Activated naive CD4-positive, alpha-beta T cell treated with anti-CD3 and anti-CD28 coated beads, Interleukin-2, amount 10 ng/mL, durations not matched to agents 7 days and 5 days (primary cell): ENCODE measurements at regions of chr17 and their contacts with region 1.

Region 1: DNA sequence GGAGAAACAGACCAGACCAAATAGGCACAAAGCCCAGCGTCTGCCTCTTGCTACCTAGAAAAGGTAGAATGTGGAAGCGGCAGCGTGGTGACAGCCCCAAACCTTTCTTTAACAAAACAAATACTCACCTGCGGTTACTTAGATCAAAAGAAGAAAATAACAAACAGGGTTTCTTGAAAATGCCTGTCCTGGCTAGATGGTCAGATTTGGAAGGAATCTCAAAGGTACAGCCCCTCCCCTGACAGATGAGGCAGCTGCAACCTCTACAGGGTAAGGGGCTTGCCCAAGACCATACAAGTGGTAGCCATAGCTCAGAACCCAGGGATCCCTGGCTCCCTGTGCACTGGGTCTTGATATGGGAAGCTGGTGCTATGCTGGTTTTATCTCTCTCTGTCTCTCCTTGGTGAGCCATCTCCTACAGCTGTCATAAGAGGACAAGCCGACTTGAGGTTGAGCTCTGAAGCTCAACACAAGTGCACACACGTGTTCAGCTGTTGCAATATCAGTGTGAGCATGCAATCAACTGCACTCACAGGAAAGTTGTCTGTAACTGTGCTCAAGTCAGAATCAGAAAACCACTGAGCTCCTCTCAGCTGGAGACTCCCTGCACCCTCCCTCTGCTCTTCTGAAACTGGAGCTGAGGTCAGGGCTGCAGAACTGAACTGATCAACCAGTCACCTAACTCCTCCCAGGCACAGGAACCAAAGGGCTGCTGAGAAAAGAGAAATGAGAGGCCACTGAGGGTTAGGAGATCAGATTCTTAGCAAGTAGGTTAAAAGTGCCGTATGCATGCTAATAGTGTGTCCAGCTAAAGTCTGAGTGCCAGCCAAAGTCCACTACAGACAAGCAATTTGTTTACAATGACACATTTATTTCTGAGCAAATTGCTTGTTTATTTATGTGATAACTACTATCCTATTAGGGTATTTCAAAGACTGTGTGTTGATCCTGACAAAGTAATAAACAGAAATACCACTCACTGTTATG is 6.1 kb upstream of the RNF157 start:
- DNase-seq: peak; percentile 86
- H3K4me3 Mint-ChIP-seq: peak overlapping the region; percentile 22
- H3K27ac Mint-ChIP-seq: peak overlapping the region; percentile 90
- H3K4me1 Mint-ChIP-seq: peaks cover 88% of the 10 kb centered on the region
- H3K27me3 Mint-ChIP-seq: no peaks in the 10 kb centered on the region

Region 2: DNA sequence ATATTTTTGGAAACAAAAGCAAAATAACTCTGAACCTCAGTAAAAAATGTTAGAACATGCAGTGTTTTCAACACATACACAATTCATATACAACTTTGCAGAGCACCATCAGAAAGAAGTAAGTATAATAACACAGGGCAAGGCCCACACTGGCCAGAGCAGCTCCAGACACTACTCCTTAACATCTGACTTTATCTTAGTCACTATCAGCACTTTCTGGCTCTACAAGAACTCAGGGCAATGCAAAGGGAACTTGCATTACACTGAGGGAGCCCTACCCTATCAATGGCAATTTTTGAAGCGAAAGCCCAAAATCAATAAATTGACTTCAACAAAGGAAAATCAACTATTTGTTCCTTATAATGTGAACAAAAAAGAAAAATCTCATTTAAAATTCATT is 22.6 kb before region 1 on chr17:
- CTCF ChIA-PET with region 1: no interaction called
- DNase-seq: no peak
- H3K4me3 Mint-ChIP-seq: no peak overlapping the region
- H3K27ac Mint-ChIP-seq: peak overlapping the region; percentile 45
- H3K4me1 Mint-ChIP-seq: peaks cover 39% of the 10 kb centered on the region
- H3K27me3 Mint-ChIP-seq: no peaks in the 10 kb centered on the region

Region 3: GRCh38 chr17:76264755-76265596 is 18.6 kb after region 1 on chr17 and contains the start of gene UBALD2:
- CTCF ChIA-PET with region 1: interaction called, 39 read pairs
- DNase-seq: peak; percentile 99
- H3K4me3 Mint-ChIP-seq: peak within 1 kb of the TSS; percentile 96
- H3K27ac Mint-ChIP-seq: peak within 1 kb of the TSS; percentile 99
- H3K4me1 Mint-ChIP-seq: peaks cover 60% of the 10 kb centered on the region
- H3K27me3 Mint-ChIP-seq: peaks cover 5% of the 10 kb centered on the region